ENCODE measurements at regions of chrX and their contacts with region 1.

Region 1: GRCh38 chrX:12685541-12685940 is 105.7 kb upstream of the PRPS2 start:
- DNase-seq: no peak
- H3K4me3 ChIP-seq: no peak overlapping the region
- CTCF ChIP-seq: no peak

Region 2: DNA sequence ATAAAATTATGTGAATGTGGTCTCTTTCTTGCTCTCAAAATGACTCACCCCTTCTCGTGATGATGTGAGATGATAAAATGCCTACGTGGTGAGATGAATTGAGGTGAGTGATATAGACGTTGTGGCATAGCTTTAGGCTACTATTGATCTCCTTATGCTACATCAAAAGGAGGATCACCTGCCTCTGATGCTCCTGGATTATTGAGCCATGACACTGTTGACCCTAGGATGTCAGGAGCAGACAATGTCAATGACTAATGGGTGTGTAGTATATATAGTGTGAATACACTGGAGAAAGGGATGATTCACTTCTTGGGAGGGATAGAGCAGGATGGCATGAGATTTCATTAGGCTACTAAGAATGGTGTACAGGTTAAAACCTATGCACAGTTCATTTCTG is 105.0 kb before region 1 on chrX:
- in situ Hi-C with region 1: loop called (anchors 5 kb)
- DNase-seq: no peak
- H3K4me3 ChIP-seq: no peak overlapping the region
- CTCF ChIP-seq: no peak

Region 3: GRCh38 chrX:12741439-12741838 is 55.9 kb after region 1 on chrX:
- in situ Hi-C with region 1: no loop called
- DNase-seq: no peak
- H3K4me3 ChIP-seq: no peak overlapping the region
- CTCF ChIP-seq: no peak

Region 4: DNA sequence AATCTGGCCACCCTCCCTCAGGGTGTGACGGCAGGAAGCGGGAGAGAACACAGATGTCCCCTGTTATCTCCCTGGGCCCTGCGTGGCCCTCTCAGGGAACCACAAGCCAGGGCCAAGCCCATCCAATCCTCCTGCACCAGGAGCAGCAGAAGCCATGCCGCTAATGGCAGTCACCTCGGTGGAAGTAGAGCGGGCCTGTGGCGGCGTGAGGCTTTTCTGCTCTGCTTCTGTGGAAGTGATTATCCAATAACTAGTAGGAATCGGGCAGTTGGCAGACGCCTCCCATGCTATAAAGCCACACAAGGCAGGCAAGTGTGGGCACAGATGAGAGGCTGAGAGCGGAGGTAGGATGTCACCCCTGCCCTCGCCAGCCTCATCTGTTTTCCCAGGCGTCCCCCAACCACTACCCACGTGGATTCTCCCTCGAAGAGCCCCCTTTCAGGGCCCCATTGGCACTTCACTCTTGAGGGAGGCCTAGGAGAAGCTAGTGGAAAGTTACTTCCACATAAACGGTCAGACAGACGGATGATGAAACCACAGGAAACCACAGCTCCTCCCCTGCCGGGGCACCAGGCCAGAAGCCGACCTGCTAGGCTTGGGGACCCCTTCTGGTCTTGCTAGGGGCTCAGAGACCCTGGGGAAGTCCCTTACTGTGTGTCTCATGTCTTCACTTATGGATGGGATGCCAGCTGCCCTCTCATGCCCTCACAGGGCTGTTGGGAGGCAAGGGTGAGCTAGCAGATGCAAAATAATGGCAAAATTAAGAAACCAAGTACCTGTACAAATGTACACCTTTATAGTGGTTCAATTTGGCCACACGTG is 270.6 kb after region 1 on chrX:
- in situ Hi-C with region 1: no loop called
- DNase-seq: no peak
- H3K4me3 ChIP-seq: no peak overlapping the region
- CTCF ChIP-seq: no peak

Measured in astrocyte of the cerebellum (primary cell).